Heart left ventricle (tissue), 16 donors: ENCODE measurements at regions of chr9 and their contacts with region 1.

Region 1: GRCh38 chr9:38727497-38728001 is 7.6 kb upstream of the FAM240B start:
- DNase-seq: no peak
- ATAC-seq: peak in 3 of 4 donors; percentile 49 to 78 (median 74)
- H3K4me3 ChIP-seq: no peak overlapping the region
- H3K27ac ChIP-seq: no peak overlapping the region
- H3K4me1 ChIP-seq: no peaks in the 10 kb centered on the region
- H3K27me3 ChIP-seq: no peaks in the 10 kb centered on the region
- CTCF ChIP-seq: peak in 9 of 12 donors; percentile 12 to 42 (median 33)
- POLR2A ChIP-seq: no peak

Region 2: GRCh38 chr9:37776328-37776727 is 951.2 kb before region 1 on chr9:
- intact Hi-C with region 1: no loop called
- DNase-seq: no peak
- ATAC-seq: no peak
- H3K4me3 ChIP-seq: no peak overlapping the region
- H3K27ac ChIP-seq: no peak overlapping the region
- H3K4me1 ChIP-seq: no peaks in the 10 kb centered on the region
- H3K27me3 ChIP-seq: no peaks in the 10 kb centered on the region
- CTCF ChIP-seq: no peak
- POLR2A ChIP-seq: no peak

Region 3: GRCh38 chr9:38298503-38298902 is 429.0 kb before region 1 on chr9:
- intact Hi-C with region 1: no loop called
- DNase-seq: peak in 2 of 5 donors; percentile 36 to 38
- ATAC-seq: peak in 3 of 4 donors; percentile 50 to 87 (median 76)
- H3K4me3 ChIP-seq: no peak overlapping the region
- H3K27ac ChIP-seq: no peak overlapping the region
- H3K4me1 ChIP-seq: peaks cover 0 to 15% (median 7%) of the 10 kb centered on the region in 12 donors
- H3K27me3 ChIP-seq: no peaks in the 10 kb centered on the region
- CTCF ChIP-seq: no peak
- POLR2A ChIP-seq: no peak

Region 4: DNA sequence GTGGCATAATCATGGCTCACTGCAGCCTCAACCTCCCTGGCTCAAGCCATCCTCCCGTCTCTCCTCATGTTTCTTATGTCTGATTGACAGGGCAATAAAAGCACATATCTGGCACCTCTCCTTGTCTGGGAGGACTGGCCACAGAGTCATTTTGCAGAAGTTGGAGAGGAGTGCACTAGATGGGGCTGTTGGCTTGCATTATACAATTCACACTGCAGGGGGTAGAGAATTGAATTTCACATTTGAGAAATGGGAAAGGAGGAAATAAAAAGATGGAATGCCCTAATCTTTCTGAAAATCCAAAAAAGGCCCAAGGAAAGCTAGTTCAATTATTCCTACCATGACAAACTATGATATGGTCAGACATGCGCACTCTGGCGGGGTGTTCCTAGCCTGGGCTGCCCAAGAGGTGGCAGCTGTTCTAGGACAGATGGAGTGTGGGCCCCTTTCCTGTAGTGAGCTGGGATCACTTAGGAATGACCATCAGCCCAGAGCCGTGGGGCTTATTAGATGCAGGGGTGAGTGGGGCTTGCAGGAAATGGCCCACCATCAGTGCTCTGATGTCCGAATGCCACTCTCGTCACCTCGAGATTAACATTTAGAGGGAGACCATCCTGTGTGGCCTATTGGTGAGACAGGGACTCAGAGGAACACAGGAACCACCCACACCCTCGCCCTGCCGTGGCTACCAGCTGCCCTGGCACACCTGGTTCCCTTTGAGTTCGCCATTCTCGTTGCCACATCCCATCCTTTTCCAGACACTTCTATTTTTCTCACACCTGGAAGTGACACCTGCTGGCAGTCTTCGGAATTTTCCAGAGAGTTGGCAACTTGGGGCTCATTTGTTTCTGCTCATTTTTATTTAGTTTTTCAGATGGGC is 85.3 kb before region 1 on chr9:
- intact Hi-C with region 1: loop called in 1 of 10 experiments (anchors 5 kb)
- DNase-seq: no peak
- ATAC-seq: peak; percentile 87 to 91 (median 90)
- H3K4me3 ChIP-seq: no peak overlapping the region
- H3K27ac ChIP-seq: no peak overlapping the region
- H3K4me1 ChIP-seq: peaks cover 0 to 4% (median 0%) of the 10 kb centered on the region in 12 donors
- H3K27me3 ChIP-seq: peaks cover 0 to 7% (median 0%) of the 10 kb centered on the region in 9 donors
- CTCF ChIP-seq: peak in 11 of 12 donors; percentile 12 to 50 (median 40)
- POLR2A ChIP-seq: no peak

Region 5: GRCh38 chr9:38656896-38657295 is 70.7 kb before region 1 on chr9:
- intact Hi-C with region 1: loop called in 2 of 10 experiments (anchors 5 to 10 kb)
- DNase-seq: no peak
- ATAC-seq: no peak
- H3K4me3 ChIP-seq: no peak overlapping the region
- H3K27ac ChIP-seq: no peak overlapping the region
- H3K4me1 ChIP-seq: peaks cover 0 to 11% (median 0%) of the 10 kb centered on the region in 12 donors
- H3K27me3 ChIP-seq: peaks cover 0 to 5% (median 0%) of the 10 kb centered on the region in 9 donors
- CTCF ChIP-seq: no peak
- POLR2A ChIP-seq: no peak

Region 6: DNA sequence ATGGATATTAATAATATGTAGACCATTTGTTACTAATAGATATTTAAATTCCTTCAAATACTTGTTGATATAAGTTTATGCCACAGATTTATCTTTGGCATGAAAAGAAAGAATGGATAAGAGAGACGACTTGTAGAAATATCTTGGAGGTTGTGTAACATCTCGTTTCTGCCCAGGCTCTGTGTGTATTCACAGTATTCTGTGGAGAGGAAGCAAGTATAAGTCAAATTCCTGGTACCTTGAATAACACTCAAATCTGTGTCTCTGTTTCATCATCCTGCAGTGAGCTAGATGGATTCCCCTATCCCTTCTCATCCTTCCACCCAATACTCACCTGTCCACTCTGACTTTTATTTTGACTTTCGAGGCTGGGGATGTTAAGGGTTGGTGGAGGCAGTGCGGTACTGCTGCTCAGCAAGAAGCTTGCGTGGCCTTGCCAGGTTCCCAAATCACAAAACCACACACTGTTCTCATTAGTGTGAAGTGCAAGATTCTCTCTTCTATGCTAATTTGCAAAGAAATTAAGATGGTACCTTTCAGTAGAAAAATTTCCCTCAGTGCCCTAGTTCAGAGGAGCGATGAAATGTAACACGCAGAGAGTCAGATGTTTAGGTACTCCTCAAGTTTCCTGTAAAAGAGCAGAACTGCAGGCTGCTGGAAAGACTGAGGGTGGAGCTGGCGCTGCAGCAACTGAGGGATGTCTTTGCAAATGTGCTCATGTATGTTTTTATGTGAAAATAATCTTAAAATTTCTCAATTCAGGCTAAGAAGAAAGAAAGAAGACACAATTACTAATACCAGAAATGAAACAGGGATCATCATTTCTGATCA is 64.6 kb before region 1 on chr9:
- intact Hi-C with region 1: loop called in 2 of 10 experiments (anchors 5 to 10 kb)
- DNase-seq: no peak
- ATAC-seq: peak in 3 of 4 donors; percentile 37 to 61 (median 47)
- H3K4me3 ChIP-seq: no peak overlapping the region
- H3K27ac ChIP-seq: no peak overlapping the region
- H3K4me1 ChIP-seq: no peaks in the 10 kb centered on the region
- H3K27me3 ChIP-seq: peaks cover 0 to 5% (median 0%) of the 10 kb centered on the region in 9 donors
- CTCF ChIP-seq: peak in 5 of 12 donors; percentile 11 to 43 (median 28)
- POLR2A ChIP-seq: no peak